Endothelial cell of umbilical vein (primary cell): ENCODE measurements at regions of chr13 and their contacts with region 1.

Region 1: GRCh38 chr13:50081679-50082425 is 66.6 kb downstream of the KCNRG start:
- DNase-seq: peak; percentile 100
- H3K4me3 ChIP-seq: peak overlapping the region; percentile 86 to 99 (median 95)
- H3K27ac ChIP-seq: peak overlapping the region; percentile 88
- H3K4me1 ChIP-seq: peaks cover 27% of the 10 kb centered on the region
- H3K27me3 ChIP-seq: no peaks in the 10 kb centered on the region
- CTCF ChIP-seq: peak in 1 of 2 donors; percentile 9
- POLR2A ChIP-seq: peak; percentile 30

Region 2: GRCh38 chr13:49996951-49997895 is 84.6 kb before region 1 on chr13 and contains the start of gene TRIM13:
- CTCF ChIA-PET with region 1: interaction called, 133 read pairs
- POLR2A ChIA-PET with region 1: interaction called, 7 read pairs
- dilution Hi-C with region 1: no loop called
- intact Hi-C with region 1: loop called (anchors 1 kb)
- DNase-seq: peak; percentile 93
- H3K4me3 ChIP-seq: peak within 1 kb of the TSS; percentile 84 to 98 (median 95)
- H3K27ac ChIP-seq: peak within 1 kb of the TSS; percentile 93
- H3K4me1 ChIP-seq: peaks cover 35% of the 10 kb centered on the region
- H3K27me3 ChIP-seq: no peaks in the 10 kb centered on the region
- CTCF ChIP-seq: peak; percentile 80 to 81
- POLR2A ChIP-seq: peak; percentile 84
- total RNA-seq, gene TRIM13: 25.9 and 28.2 TPM in 2 replicates

Region 3: GRCh38 chr13:50189450-50189849 is 107.6 kb after region 1 on chr13:
- CTCF ChIA-PET with region 1: no interaction called
- POLR2A ChIA-PET with region 1: no interaction called
- dilution Hi-C with region 1: no loop called
- intact Hi-C with region 1: no loop called
- DNase-seq: no peak
- H3K4me3 ChIP-seq: no peak overlapping the region
- H3K27ac ChIP-seq: no peak overlapping the region
- H3K4me1 ChIP-seq: peaks cover 4% of the 10 kb centered on the region
- H3K27me3 ChIP-seq: no peaks in the 10 kb centered on the region
- CTCF ChIP-seq: no peak
- POLR2A ChIP-seq: no peak

Region 4: DNA sequence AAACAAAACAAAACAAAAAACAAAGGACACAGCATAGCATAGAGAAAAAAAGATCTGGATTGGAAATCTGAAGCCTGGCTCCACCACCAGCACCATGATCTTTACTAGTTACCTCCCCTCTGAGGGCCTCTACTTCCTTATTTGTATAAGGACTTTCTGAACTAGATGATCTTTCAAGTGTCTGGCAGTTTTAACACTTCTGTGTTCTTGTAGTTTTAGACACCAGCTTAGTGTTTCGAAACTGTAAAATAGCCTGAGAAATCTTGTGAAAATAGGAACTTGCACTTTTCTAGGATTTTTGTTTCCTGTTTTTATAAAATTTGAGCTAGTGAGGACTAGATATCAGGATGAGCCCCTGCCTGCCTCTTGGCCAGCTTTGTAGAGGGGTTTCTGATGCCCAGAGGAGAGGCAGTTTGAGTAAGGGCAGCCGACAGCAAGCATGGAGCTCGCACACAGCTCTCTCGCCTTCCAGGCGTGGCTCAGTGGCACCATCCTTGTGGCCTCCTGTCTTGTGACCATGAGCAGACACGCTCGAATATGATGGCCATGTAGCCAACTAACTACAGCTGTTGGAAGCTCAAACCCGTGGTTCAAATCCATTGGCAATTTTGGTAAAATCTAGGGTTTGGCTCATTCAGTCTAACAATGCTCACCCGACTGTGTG is 252.4 kb after region 1 on chr13:
- CTCF ChIA-PET with region 1: no interaction called
- POLR2A ChIA-PET with region 1: no interaction called
- dilution Hi-C with region 1: no loop called
- intact Hi-C with region 1: loop called (anchors 10 kb)
- DNase-seq: peak; percentile 7
- H3K4me3 ChIP-seq: no peak overlapping the region
- H3K27ac ChIP-seq: peak overlapping the region; percentile 7
- H3K4me1 ChIP-seq: peaks cover 10% of the 10 kb centered on the region
- H3K27me3 ChIP-seq: no peaks in the 10 kb centered on the region
- CTCF ChIP-seq: no peak
- POLR2A ChIP-seq: no peak

Region 5: DNA sequence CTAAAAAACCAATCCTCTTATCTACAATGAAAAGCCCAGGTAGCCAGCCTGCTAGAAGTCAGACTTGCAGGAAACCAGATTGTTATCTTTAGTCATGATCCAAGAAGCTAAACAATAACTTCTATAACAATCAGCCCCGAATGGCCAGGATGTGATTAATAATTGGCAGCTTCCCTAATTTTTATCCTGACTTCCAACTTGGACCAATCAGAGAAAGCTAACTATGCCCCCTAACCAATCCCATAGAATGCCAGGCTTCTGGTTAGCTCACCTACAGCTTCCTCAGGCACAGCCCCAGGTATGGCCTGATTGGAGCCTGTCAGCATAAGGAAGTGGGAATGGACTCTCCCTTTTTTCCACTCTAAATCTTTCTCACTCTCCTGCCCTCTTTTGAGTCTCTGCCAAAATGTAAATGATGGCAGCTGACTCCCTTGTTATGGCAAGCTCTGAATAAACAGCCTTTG is 366.7 kb after region 1 on chr13:
- CTCF ChIA-PET with region 1: no interaction called
- POLR2A ChIA-PET with region 1: no interaction called
- dilution Hi-C with region 1: no loop called
- intact Hi-C with region 1: loop called (anchors 1 kb)
- DNase-seq: peak; percentile 97
- H3K4me3 ChIP-seq: no peak overlapping the region
- H3K27ac ChIP-seq: peak overlapping the region; percentile 94
- H3K4me1 ChIP-seq: peaks cover 22% of the 10 kb centered on the region
- H3K27me3 ChIP-seq: no peaks in the 10 kb centered on the region
- CTCF ChIP-seq: no peak
- POLR2A ChIP-seq: peak; percentile 65

Region 6: GRCh38 chr13:50617134-50617721 is 535.4 kb after region 1 on chr13:
- CTCF ChIA-PET with region 1: interaction called, 3 read pairs
- POLR2A ChIA-PET with region 1: no interaction called
- dilution Hi-C with region 1: no loop called
- intact Hi-C with region 1: loop called (anchors 5 kb)
- DNase-seq: peak; percentile 92
- H3K4me3 ChIP-seq: no peak overlapping the region
- H3K27ac ChIP-seq: peak overlapping the region; percentile 51
- H3K4me1 ChIP-seq: peaks cover 21% of the 10 kb centered on the region
- H3K27me3 ChIP-seq: no peaks in the 10 kb centered on the region
- CTCF ChIP-seq: no peak
- POLR2A ChIP-seq: no peak

Region 7: GRCh38 chr13:50911937-50912795 is 830.3 kb after region 1 on chr13:
- CTCF ChIA-PET with region 1: interaction called, 22 read pairs
- POLR2A ChIA-PET with region 1: no interaction called
- dilution Hi-C with region 1: no loop called
- intact Hi-C with region 1: loop called (anchors 1 kb)
- DNase-seq: peak; percentile 78
- H3K4me3 ChIP-seq: no peak overlapping the region
- H3K27ac ChIP-seq: no peak overlapping the region
- H3K4me1 ChIP-seq: peaks cover 29% of the 10 kb centered on the region
- H3K27me3 ChIP-seq: no peaks in the 10 kb centered on the region
- CTCF ChIP-seq: peak; percentile 83 to 86
- POLR2A ChIP-seq: no peak